SK-N-SH (cell line): ENCODE measurements at regions of chr3 and their contacts with region 1.

Region 1: GRCh38 chr3:169149349-169149890 is 514.1 kb downstream of the MECOM start:
- DNase-seq: peak; percentile 79
- H3K4me3 ChIP-seq: peak overlapping the region; percentile 17 to 50; a peak in 2 of 4 replicates
- H3K27ac ChIP-seq: no peak overlapping the region
- H3K4me1 ChIP-seq: peaks cover 3 to 25% of the 10 kb centered on the region in 2 experiments; a peak in 2 of 4 replicates
- H3K27me3 ChIP-seq: peaks cover 37% of the 10 kb centered on the region; the same call in 1 of the 2 replicates
- CTCF ChIP-seq: peak; percentile 77
- EP300 ChIP-seq: no peak
- RAD21 ChIP-seq: peak; percentile 81

Region 2: GRCh38 chr3:169133178-169134161 is 15.9 kb before region 1 on chr3:
- CTCF ChIA-PET with region 1: interaction called, 27 read pairs
- POLR2A ChIA-PET with region 1: no interaction called
- DNase-seq: no peak
- H3K4me3 ChIP-seq: no peak overlapping the region
- H3K27ac ChIP-seq: no peak overlapping the region
- H3K4me1 ChIP-seq: no peaks in the 10 kb centered on the region
- H3K27me3 ChIP-seq: peaks cover 8% of the 10 kb centered on the region; the same call in 1 of the 2 replicates
- CTCF ChIP-seq: peak; percentile 62
- EP300 ChIP-seq: no peak
- RAD21 ChIP-seq: peak; percentile 71

Region 3: GRCh38 chr3:169218314-169218983 is 69.0 kb after region 1 on chr3:
- CTCF ChIA-PET with region 1: interaction called, 18 read pairs
- POLR2A ChIA-PET with region 1: no interaction called
- DNase-seq: peak; percentile 36
- H3K4me3 ChIP-seq: no peak overlapping the region; a peak in 1 of 4 replicates
- H3K27ac ChIP-seq: no peak overlapping the region
- H3K4me1 ChIP-seq: peaks cover 0 to 3% of the 10 kb centered on the region in 2 experiments; a peak in 2 of 4 replicates
- H3K27me3 ChIP-seq: no peaks in the 10 kb centered on the region
- CTCF ChIP-seq: peak; percentile 71
- EP300 ChIP-seq: no peak
- RAD21 ChIP-seq: peak; percentile 80

Region 4: GRCh38 chr3:169295126-169295525 is 145.7 kb after region 1 on chr3:
- CTCF ChIA-PET with region 1: interaction called, 11 read pairs
- POLR2A ChIA-PET with region 1: no interaction called
- DNase-seq: no peak
- H3K4me3 ChIP-seq: no peak overlapping the region
- H3K27ac ChIP-seq: no peak overlapping the region
- H3K4me1 ChIP-seq: no peaks in the 10 kb centered on the region; a peak in 1 of 4 replicates
- H3K27me3 ChIP-seq: no peaks in the 10 kb centered on the region
- CTCF ChIP-seq: peak; percentile 66
- EP300 ChIP-seq: no peak
- RAD21 ChIP-seq: peak; percentile 64

Region 5: GRCh38 chr3:169624533-169624972 is 475.1 kb after region 1 on chr3:
- CTCF ChIA-PET with region 1: interaction called, 10 read pairs
- POLR2A ChIA-PET with region 1: no interaction called
- DNase-seq: peak; percentile 30
- H3K4me3 ChIP-seq: no peak overlapping the region
- H3K27ac ChIP-seq: no peak overlapping the region; a peak in 1 of 4 replicates
- H3K4me1 ChIP-seq: peaks cover 0 to 10% of the 10 kb centered on the region in 2 experiments; a peak in 1 of 4 replicates
- H3K27me3 ChIP-seq: no peaks in the 10 kb centered on the region
- CTCF ChIP-seq: no peak
- EP300 ChIP-seq: no peak
- RAD21 ChIP-seq: no peak

Region 6: DNA sequence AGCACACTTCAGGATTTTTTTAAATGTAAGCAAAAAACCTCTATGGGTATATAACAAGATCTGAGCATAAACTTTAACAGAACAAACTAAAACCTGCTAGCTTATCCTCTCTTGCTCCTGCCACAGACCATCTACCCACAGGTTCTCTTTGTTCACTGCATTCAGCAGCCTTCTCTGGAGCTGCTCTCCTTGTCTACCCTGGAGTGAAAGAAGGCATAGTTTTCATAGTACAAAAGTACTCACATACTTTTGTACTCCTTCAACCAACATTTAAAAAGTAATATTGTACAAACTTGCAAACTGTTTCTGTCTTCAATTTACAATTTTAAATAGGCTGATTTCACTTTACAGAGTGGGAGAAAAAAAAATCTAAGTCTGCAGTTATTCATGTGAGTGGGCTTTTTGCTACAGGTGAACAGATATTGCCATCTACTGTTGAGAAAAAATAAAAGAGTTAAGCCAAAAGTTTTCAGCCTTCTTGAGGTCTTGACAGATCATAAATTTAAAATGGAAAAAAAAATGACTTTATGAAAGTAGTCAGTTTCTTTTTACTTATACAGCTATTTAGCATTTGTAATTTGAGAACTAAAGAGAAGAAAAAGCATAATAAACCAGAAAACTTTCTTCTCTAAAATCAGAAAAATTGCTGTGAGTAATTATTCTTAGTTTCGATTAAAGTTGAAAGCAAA is 595.1 kb after region 1 on chr3:
- CTCF ChIA-PET with region 1: interaction called, 10 read pairs
- POLR2A ChIA-PET with region 1: no interaction called
- DNase-seq: no peak
- H3K4me3 ChIP-seq: no peak overlapping the region
- H3K27ac ChIP-seq: no peak overlapping the region
- H3K4me1 ChIP-seq: no peaks in the 10 kb centered on the region
- H3K27me3 ChIP-seq: peaks cover 5% of the 10 kb centered on the region; the same call in 1 of the 2 replicates
- CTCF ChIP-seq: peak; percentile 55
- EP300 ChIP-seq: no peak
- RAD21 ChIP-seq: peak; percentile 66